GM10248 (cell line): ENCODE measurements at regions of chr5 and their contacts with region 1.

Region 1: DNA sequence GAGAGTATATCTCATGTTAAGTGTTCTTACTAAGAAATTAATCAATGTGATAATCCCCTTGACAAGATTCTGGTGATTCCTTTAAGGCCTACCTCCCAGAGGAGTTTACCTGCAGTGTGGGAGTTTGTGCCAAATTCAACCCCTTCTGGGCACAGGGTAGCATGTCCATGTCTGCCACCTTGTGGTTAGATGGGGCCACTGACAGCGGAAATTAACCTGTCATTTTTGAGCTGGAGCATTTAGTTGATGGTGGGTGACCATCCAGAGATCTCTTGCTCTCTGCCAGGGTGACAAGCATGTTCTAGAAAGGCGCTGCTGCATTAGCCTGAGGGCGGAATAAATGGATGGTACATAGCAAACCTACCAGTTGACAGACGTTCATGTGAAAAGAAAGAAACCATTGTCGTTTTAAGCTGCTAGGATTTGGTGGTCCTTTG is 132.2 kb downstream of the FBXO4 start:
- DNase-seq: peak; percentile 54
- CTCF ChIP-seq: peak; percentile 80

Region 2: DNA sequence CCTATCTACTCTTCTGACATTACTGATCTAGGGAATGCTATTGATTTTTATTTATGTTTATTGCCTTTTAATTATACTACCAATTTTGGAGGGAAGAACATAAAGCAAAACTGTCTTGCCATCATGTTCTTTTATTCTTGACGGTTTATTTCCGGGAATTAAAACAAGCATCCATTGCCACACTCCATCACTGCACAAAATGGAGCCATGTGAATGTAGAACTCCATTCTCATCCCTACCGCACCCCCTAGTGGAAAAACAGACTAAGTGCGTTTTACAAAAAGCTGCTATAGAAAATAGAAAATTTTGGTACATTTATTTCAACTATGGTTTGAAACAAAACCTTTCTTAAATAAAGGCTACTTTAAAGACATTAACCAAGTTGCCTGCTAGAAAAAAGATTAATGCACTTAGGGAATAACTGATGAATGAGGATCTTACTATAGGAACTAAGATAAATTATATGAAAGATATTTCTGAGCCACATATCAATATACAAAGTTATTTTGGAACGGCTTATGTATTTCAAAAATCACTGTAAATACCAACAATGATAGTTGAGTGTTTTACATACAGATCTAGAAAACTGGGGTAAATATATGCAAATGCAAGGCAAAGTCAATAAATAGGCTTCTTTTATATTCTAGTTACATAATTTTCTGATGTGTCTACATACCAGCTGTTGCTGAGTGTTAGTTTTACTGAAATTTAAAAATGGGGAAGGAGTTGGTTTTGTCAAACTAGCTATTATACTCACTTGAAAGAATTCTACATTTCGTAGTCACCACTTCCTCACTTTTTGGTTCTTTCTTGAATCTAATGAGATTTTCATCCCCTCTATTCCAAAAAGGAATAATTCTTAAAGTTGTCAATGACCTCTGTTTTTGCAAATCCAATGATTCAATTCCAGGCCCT is 213.6 kb before region 1 on chr5:
- CTCF ChIA-PET with region 1: interaction called, 21 read pairs
- POLR2A ChIA-PET with region 1: no interaction called
- DNase-seq: no peak
- CTCF ChIP-seq: peak; percentile 71

Region 3: DNA sequence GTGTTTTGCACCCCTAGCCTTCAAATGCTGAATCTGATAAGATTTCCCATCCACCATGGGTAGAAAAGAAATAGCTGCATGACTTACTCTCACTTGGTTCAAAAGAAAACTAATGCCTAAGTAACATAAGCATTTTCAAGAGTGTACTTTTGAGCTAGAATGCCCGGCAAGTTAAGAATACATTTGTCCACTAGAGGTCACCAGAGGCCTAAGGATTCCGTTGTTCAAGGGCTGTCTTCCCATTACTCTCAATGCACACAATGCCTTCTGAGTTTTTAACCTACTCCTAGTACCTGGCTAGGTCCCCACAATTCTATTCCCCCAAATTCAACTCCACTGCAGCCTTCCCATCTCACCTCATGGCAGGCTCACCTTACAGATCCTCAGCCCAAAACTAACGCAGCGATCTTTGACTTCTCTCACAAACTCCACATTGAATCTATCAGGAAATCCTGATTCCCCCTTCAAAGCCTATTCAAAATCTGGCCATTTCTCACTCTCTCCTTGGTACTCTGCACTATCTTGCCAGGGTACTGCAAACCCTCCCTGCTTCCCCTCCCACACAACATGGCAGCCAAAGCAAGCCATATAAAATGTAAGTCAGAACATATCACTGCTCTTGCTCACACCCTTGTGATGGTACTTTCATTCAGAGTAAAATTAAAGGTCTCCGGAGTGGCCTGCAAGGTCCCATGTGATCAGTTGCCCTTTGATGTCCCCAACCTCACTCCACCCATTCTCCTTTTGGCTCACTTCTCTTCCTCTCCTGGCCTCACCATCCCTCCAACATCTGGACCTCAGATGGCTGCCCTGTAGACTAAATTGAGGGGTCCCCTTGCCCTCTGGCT is 200.4 kb before region 1 on chr5:
- CTCF ChIA-PET with region 1: interaction called, 269 read pairs
- POLR2A ChIA-PET with region 1: interaction called, 4 read pairs
- DNase-seq: peak; percentile 54
- CTCF ChIP-seq: peak; percentile 82

Region 4: DNA sequence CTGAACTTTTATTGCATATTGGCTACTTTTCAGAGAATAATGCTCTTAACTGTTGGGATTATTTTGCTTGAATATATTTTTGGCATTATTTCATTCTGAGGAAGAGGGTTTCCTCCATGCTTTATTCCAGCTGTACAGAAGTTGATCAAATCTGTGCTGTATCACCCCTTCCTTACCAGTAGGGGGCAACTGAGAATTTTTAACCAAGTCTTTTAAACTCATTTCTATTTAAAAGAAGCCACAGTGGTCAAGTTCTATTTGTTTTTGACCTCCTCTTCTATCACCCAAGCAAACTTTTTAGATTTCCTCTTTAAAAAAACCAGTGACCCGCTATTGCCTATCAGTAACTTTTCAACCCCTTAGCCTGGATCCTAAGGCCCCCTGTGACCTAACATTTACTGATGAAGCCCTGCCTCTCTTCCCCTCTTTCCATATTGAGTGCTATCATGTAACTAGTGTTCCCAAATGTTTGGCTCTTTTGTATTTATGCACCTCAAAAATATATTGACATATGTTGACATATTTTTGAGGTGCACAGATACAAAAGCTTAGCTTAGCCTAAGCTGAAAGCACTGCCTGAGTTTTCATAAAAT is 51.6 kb before region 1 on chr5:
- CTCF ChIA-PET with region 1: interaction called, 15 read pairs
- POLR2A ChIA-PET with region 1: no interaction called
- DNase-seq: peak; percentile 13
- CTCF ChIP-seq: peak; percentile 54

Region 5: GRCh38 chr5:42026446-42026845 is 30.8 kb before region 1 on chr5:
- CTCF ChIA-PET with region 1: interaction called, 13 read pairs
- POLR2A ChIA-PET with region 1: no interaction called
- DNase-seq: no peak
- CTCF ChIP-seq: no peak

Region 6: GRCh38 chr5:42043400-42043799 is 13.9 kb before region 1 on chr5:
- CTCF ChIA-PET with region 1: interaction called, 14 read pairs
- POLR2A ChIA-PET with region 1: no interaction called
- DNase-seq: no peak
- CTCF ChIP-seq: no peak

Region 7: DNA sequence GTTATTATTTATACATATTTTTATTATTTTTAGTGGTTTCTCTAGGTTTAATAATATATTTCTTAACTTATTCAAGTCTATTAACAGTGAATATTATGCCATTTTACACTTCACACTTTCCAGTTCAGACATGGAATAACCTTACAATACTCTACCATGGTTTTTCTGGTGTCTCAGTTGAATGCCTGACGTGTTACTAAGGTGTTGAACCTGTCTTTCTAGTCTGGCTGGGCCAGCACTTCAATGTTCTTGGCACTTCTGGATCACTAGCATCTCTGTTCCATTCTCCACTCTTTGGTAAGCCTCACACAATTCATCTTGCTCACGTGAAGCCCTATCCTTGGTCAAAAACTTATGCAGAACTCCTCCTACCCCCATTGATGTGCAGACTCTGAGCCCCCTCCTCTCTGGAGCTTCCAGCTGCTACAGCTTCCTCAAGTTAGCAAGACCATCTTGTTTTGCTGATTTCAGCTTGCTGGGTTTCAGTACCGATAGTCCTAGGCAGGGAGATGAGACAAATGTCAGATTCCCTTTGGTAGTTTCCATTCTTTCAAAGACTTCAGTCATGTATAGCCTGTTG is 110.9 kb after region 1 on chr5:
- CTCF ChIA-PET with region 1: no interaction called
- POLR2A ChIA-PET with region 1: no interaction called
- DNase-seq: no peak
- CTCF ChIP-seq: no peak